CD4-positive, alpha-beta T cell (primary cell): ENCODE measurements at regions of chr6 and their contacts with region 1.

Region 1: GRCh38 chr6:151409260-151409659 is 17.9 kb upstream of the ZBTB2 start:
- DNase-seq: no peak
- ATAC-seq: no peak
- H3K4me3 ChIP-seq: no peak overlapping the region
- H3K4me3 Mint-ChIP-seq: no peak overlapping the region
- H3K27ac ChIP-seq: no peak overlapping the region
- H3K27ac Mint-ChIP-seq: peak overlapping the region; percentile 4
- H3K4me1 ChIP-seq: peaks cover 15% of the 10 kb centered on the region
- H3K4me1 Mint-ChIP-seq: peaks cover 44% of the 10 kb centered on the region
- H3K27me3 ChIP-seq: no peaks in the 10 kb centered on the region
- H3K27me3 Mint-ChIP-seq: no peaks in the 10 kb centered on the region
- CTCF ChIP-seq: no peak

Region 2: DNA sequence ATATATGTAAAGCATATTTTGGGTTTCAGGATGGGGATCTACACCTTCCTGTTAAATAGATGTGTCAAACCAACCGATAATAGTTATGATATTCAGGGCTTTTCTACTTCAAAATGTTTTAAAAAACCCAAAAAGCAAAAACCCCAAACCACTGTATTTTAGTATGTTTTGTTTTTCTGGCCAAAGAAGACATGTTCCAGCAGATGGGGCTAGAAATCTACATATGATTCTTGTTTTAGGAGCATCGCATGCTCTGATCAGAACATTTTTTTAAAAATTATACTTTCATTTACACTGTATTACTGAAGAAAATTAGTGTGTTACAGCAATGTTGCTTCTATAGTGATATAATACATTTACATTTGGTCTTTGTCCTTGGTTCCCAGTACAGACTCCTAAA is 31.7 kb after region 1 on chr6:
- CTCF ChIA-PET with region 1: interaction called, 11 read pairs
- POLR2A ChIA-PET with region 1: interaction called, 4 read pairs
- intact Hi-C with region 1: loop called in 1 of 2 experiments (anchors 5 kb)
- DNase-seq: peak in 3 of 14 experiments; percentile 46 to 67 (median 66)
- ATAC-seq: peak; percentile 66
- H3K4me3 ChIP-seq: no peak overlapping the region
- H3K4me3 Mint-ChIP-seq: no peak overlapping the region
- H3K27ac ChIP-seq: no peak overlapping the region
- H3K27ac Mint-ChIP-seq: no peak overlapping the region
- H3K4me1 ChIP-seq: peaks cover 6% of the 10 kb centered on the region
- H3K4me1 Mint-ChIP-seq: peaks cover 52% of the 10 kb centered on the region
- H3K27me3 ChIP-seq: no peaks in the 10 kb centered on the region
- H3K27me3 Mint-ChIP-seq: no peaks in the 10 kb centered on the region
- CTCF ChIP-seq: peak; percentile 65

Region 3: GRCh38 chr6:151446121-151446693 is 36.9 kb after region 1 on chr6:
- CTCF ChIA-PET with region 1: interaction called, 11 read pairs
- POLR2A ChIA-PET with region 1: interaction called, 18 read pairs
- intact Hi-C with region 1: loop called (anchors 5 kb)
- DNase-seq: no peak
- ATAC-seq: no peak
- H3K4me3 ChIP-seq: no peak overlapping the region
- H3K4me3 Mint-ChIP-seq: no peak overlapping the region
- H3K27ac ChIP-seq: no peak overlapping the region
- H3K27ac Mint-ChIP-seq: no peak overlapping the region
- H3K4me1 ChIP-seq: peaks cover 7% of the 10 kb centered on the region
- H3K4me1 Mint-ChIP-seq: peaks cover 48% of the 10 kb centered on the region
- H3K27me3 ChIP-seq: no peaks in the 10 kb centered on the region
- H3K27me3 Mint-ChIP-seq: no peaks in the 10 kb centered on the region
- CTCF ChIP-seq: no peak